ENCODE measurements at regions of chr21 and their contacts with region 1.

Region 1: GRCh38 chr21:34888569-34889319 is 160.4 kb downstream of the RUNX1 start:
- DNase-seq: peak; percentile 92 to 97 (median 96)
- H3K4me3 ChIP-seq: peak overlapping the region; percentile 38 to 83 (median 52)
- H3K27ac ChIP-seq: peak overlapping the region; percentile 81 to 93 (median 93)
- H3K4me1 ChIP-seq: peaks cover 0 to 13% of the 10 kb centered on the region in 2 donors
- H3K27me3 ChIP-seq: peaks cover 30% of the 10 kb centered on the region
- CTCF ChIP-seq: no peak
- POLR2A ChIP-seq: peak; percentile 96 to 99

Region 2: GRCh38 chr21:33968080-33968994 is 920.4 kb before region 1 on chr21:
- intact Hi-C with region 1: no loop called
- DNase-seq: no peak
- H3K4me3 ChIP-seq: no peak overlapping the region
- H3K27ac ChIP-seq: no peak overlapping the region
- H3K4me1 ChIP-seq: peaks cover 12 to 14% of the 10 kb centered on the region in 2 donors
- H3K27me3 ChIP-seq: no peaks in the 10 kb centered on the region
- CTCF ChIP-seq: no peak
- POLR2A ChIP-seq: no peak

Region 3: DNA sequence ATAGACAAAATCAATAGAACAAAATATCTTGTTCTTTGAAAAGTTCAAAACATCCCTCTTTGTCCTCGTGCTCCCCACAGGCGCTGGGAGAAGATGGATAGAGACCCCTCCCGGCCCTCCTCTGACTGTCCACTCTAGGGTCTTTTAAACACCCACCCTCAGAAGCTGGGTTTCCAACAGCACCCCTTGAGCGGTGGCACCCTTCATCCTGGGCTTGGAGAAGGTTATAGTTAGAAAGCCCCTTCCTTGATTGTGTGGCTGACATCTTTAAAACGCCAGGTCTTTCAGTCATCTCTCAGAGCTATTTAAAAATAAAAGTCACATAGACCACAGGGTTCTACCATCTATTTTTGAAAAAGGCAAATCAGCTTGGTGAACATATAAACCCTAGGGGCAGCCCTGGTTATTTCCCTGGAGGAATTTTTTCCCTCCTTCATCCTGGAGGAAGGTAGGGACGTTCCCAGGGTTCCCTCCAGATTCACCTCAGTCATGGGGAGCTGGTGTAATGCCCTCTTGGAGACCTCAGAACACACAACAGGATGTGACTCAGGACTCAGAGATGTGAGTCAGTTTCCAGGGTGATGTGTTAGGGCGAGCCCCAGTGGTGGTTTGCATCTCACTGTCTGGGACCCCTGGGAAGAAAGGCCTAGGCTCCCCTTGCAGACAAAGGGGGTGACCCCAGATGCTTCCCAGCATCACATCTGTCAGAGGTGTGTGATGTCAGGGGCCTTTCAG is 81.4 kb before region 1 on chr21:
- intact Hi-C with region 1: loop called in 1 of 2 experiments (anchors 10 kb)
- DNase-seq: peak in 5 of 7 donors; percentile 33 to 52 (median 42)
- H3K4me3 ChIP-seq: no peak overlapping the region
- H3K27ac ChIP-seq: peak overlapping the region in 3 of 5 donors; percentile 74 to 89 (median 78)
- H3K4me1 ChIP-seq: peaks cover 3 to 18% of the 10 kb centered on the region in 2 donors
- H3K27me3 ChIP-seq: no peaks in the 10 kb centered on the region
- CTCF ChIP-seq: no peak
- POLR2A ChIP-seq: no peak

Region 4: DNA sequence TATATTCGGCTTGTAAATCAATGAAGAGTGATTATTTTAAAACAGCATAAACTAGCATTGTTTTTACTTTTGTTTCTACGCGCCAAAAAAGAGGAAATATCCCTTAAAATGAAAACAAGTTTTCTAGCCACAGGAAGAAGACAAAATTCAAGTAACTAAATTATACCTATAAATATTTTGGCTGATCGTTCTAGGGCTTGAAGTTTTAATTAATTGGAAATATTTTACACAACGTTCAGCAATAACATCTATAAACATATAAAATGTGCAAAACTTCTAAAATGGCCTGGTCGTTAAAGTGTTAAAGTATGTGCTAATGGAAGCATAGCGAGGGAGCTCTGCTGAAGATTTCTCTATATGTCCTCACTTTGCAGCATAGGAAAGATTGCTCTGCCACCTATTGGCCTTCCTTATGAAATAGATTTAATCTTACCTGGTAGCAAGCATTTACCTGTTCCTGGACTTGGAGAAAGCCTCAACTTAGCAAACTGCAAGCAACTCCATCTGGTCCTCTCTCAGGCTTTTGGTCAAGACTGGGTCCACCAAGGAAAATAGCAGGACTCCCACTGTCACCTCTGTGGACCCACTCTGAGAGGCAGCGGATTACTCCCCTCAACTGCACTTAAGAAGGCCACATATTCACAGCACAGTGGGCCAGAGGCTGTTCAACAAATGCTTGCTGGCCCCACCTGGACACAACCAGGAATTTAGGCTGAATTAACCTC is 511.7 kb after region 1 on chr21:
- intact Hi-C with region 1: loop called in 1 of 2 experiments (anchors 5 kb)
- DNase-seq: peak in 5 of 7 donors; percentile 16 to 29 (median 23)
- H3K4me3 ChIP-seq: no peak overlapping the region
- H3K27ac ChIP-seq: no peak overlapping the region
- H3K4me1 ChIP-seq: no peaks in the 10 kb centered on the region
- H3K27me3 ChIP-seq: peaks cover 4% of the 10 kb centered on the region
- CTCF ChIP-seq: peak; percentile 16 to 63 (median 58)
- POLR2A ChIP-seq: no peak

Region 5: GRCh38 chr21:35840197-35840799 is 951.6 kb after region 1 on chr21:
- intact Hi-C with region 1: loop called in 1 of 2 experiments (anchors 10 kb)
- DNase-seq: peak; percentile 56 to 85 (median 71)
- H3K4me3 ChIP-seq: no peak overlapping the region
- H3K27ac ChIP-seq: no peak overlapping the region
- H3K4me1 ChIP-seq: no peaks in the 10 kb centered on the region
- H3K27me3 ChIP-seq: no peaks in the 10 kb centered on the region
- CTCF ChIP-seq: peak; percentile 52 to 92 (median 82)
- POLR2A ChIP-seq: no peak

Measured in adrenal gland (tissue), 19 donors.